Common myeloid progenitor, CD34-positive (primary cell): ENCODE measurements at regions of chr10 and their contacts with region 1.

Region 1: DNA sequence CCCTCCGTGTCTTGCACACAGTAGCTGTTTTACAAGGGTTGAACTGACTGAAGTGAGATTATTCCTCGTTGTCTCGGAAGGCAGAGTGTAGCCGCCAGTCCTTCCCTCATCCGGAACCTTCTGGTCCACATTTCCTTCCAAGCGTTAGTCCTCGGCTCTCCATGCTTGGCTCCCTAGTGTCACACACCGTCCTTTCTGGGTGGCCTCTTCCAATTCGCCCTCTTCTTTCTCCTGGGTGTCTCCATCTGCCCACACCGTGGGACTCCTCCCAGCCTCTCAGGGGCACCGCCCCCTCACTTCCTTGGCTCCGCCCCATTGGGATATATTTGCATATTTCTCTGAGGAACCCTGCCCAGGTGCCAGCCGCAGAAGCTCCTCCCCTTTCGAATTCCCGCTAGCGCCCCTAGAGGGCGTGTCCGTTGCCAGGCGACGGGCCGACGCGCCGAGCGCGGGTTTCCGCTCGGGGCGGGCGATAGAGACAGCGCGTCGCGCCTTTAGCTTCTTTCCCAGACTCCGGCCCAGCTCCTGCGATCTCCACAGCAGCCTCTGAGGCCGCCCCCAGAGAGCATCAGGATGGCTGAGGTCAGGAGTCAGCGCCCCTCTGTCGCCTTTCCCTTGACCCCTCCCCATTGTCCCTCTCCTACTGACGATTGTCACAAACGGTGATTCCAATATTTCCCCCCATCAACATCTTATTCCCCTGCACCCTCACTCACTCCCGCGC is at the start of gene CFAP58:
- DNase-seq: peak; percentile 89 to 92 (median 90)
- H3K4me3 ChIP-seq: peak within 1 kb of the TSS; percentile 24 to 84 (median 66)
- H3K27ac ChIP-seq: no peak within 1 kb of the TSS
- H3K4me1 ChIP-seq: peaks cover 32 to 48% (median 42%) of the 10 kb centered on the region in 4 experiments
- H3K27me3 ChIP-seq: peaks cover 0 to 7% (median 0%) of the 10 kb centered on the region in 5 experiments

Region 2: DNA sequence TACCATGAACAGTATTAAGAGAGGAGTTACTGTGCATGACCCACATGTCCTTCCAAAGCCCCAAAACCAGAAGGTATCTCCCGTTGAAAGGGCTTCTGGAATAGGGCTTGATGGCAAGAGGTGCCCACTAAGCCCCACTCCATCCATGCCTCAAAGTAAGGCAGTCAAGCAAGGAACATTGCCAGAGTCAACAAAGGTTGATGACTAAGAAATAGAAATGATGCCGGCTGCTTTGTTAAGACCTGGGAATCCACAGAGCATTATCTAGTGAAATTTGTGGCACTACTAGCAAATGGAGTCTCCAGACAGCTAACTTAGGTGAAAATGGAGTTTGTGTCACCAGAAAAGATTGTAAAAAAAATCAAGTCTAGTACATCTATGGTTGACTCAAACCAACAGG is 225.3 kb before region 1 on chr10:
- CTCF ChIA-PET with region 1: no interaction called
- POLR2A ChIA-PET with region 1: no interaction called
- DNase-seq: no peak
- H3K4me3 ChIP-seq: no peak overlapping the region
- H3K27ac ChIP-seq: no peak overlapping the region
- H3K4me1 ChIP-seq: peaks cover 0 to 7% (median 5%) of the 10 kb centered on the region in 4 experiments
- H3K27me3 ChIP-seq: no peaks in the 10 kb centered on the region

Region 3: GRCh38 chr10:104291439-104291951 is 62.0 kb before region 1 on chr10:
- CTCF ChIA-PET with region 1: interaction called, 190 read pairs
- POLR2A ChIA-PET with region 1: no interaction called
- DNase-seq: peak; percentile 84 to 93 (median 91)
- H3K4me3 ChIP-seq: peak overlapping the region in 1 of 7 experiments; percentile 55
- H3K27ac ChIP-seq: no peak overlapping the region
- H3K4me1 ChIP-seq: peaks cover 0 to 17% (median 8%) of the 10 kb centered on the region in 4 experiments
- H3K27me3 ChIP-seq: no peaks in the 10 kb centered on the region

Region 4: DNA sequence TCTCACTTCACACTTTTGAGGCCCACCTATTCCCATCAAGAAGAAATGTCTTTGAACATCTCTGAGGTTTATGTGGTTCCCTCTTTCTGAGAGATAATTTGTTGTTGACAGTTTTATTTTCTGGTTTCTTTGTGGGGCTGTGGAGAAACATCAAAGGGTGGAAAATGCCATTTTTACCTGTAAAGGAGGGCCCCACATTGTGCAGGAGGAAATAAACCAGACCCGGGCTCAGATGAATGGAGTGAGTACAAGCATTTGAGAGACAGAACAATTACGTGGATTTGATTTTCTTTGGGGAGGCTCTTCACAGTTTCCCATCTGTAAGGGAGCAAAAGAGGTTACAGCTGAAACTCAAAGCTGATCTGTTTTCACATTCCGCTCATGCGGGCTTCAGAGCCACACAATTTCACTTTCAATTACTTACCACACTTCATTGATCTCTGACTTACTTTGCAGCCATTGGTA is 45.0 kb before region 1 on chr10:
- CTCF ChIA-PET with region 1: interaction called, 191 read pairs
- POLR2A ChIA-PET with region 1: interaction called, 4 read pairs
- DNase-seq: no peak
- H3K4me3 ChIP-seq: no peak overlapping the region
- H3K27ac ChIP-seq: no peak overlapping the region
- H3K4me1 ChIP-seq: peaks cover 9 to 27% (median 20%) of the 10 kb centered on the region in 4 experiments
- H3K27me3 ChIP-seq: no peaks in the 10 kb centered on the region

Region 5: GRCh38 chr10:104328896-104329710 is 24.4 kb before region 1 on chr10:
- CTCF ChIA-PET with region 1: interaction called, 68 read pairs
- POLR2A ChIA-PET with region 1: no interaction called
- DNase-seq: peak; percentile 54 to 89 (median 83)
- H3K4me3 ChIP-seq: peak overlapping the region in 6 of 7 experiments; percentile 25 to 70 (median 55)
- H3K27ac ChIP-seq: peak overlapping the region in 1 of 2 experiments; percentile 61
- H3K4me1 ChIP-seq: peaks cover 17 to 92% (median 79%) of the 10 kb centered on the region in 4 experiments
- H3K27me3 ChIP-seq: no peaks in the 10 kb centered on the region